Left cardiac atrium (tissue), 4 donors: ENCODE measurements at regions of chr21 and their contacts with region 1.

Region 1: GRCh38 chr21:14722841-14723483 is 176.8 kb upstream of the SAMSN1 start:
- DNase-seq: no peak
- ATAC-seq: no peak

Region 2: DNA sequence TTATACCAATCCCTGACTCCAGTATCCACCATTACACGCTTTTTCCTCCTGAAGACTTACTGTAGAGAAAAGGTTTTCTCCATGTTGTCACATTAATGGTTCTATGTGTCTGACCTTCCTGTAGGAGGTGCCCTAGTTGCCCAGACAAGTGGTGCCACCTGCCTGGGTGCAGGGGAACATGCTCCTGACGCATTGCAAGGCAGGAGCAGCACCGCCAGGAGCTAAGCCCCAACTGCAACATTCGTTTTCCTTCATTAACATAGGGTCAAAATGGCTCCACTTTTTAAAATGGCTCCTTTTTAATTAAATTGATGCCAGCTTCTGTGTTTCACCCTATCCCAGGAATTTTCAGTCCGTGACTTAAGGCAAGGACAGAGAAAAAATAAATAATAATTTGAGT is 43.3 kb after region 1 on chr21:
- intact Hi-C with region 1: loop called in 1 of 2 experiments (anchors 5 kb)
- DNase-seq: no peak
- ATAC-seq: no peak

Region 3: DNA sequence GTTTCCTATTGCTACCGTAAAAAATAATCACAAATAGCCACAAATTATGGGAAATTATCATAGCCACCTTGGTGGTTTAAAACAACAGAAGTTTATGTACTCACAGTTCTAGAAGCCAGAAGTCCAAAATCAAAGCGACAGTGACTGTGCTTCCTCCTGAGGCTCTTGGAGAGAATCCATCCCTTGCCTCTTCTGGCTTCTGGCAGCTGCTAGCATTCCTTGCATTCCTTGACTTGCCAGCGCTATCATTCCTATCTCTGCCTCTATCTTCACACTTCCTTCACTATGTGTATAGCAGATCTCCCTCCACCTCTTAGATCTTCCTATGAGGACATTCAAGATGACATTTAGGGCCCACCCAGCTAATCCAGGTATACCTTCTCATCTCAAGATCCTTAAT is 826.7 kb after region 1 on chr21:
- intact Hi-C with region 1: loop called in 1 of 2 experiments (anchors 10 kb)
- DNase-seq: no peak
- ATAC-seq: no peak